ENCODE measurements at regions of chr10 and their contacts with region 1.

Region 1: GRCh38 chr10:26556748-26557640 is 118.9 kb downstream of the APBB1IP start:
- DNase-seq: no peak
- ATAC-seq: peak; percentile 82 to 84

Region 2: DNA sequence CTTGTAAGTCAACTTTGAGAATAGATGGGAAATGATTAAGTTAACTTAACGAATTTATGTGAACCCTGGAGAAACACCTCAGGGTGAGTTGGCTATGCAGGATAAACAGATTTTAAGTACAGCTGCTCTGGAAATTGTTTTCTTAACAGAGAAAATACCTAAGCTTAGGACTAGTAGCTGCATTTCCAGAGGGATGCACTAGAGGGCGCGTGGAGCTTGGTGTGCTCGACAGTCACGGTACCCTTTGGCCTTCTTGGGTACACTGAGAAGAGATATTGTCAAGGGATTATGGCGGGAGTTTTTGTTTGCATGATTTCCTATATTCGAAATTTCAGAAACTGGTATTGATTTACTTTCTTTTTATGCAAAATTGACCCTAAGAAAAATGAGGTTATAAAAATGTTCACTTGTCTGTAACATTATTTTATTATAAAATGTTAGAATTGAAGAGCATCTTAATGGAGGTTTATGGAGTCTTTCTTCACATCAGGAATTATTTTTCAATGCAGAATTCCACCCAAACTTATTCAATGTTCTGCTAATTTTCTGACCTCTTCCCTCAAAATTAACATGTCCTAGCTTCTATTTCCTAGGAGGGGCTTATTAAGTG is 681.3 kb before region 1 on chr10:
- intact Hi-C with region 1: loop called (anchors 5 to 10 kb)
- DNase-seq: peak; percentile 74
- ATAC-seq: peak; percentile 50 to 53

Region 3: GRCh38 chr10:26334932-26335573 is 221.9 kb before region 1 on chr10:
- intact Hi-C with region 1: loop called (anchors 2 to 5 kb)
- DNase-seq: peak; percentile 24
- ATAC-seq: peak; percentile 80 to 87

Measured in left cardiac atrium (tissue), 4 donors.